CD8-positive, alpha-beta T cell (primary cell): ENCODE measurements at regions of chr4 and their contacts with region 1.

Region 1: DNA sequence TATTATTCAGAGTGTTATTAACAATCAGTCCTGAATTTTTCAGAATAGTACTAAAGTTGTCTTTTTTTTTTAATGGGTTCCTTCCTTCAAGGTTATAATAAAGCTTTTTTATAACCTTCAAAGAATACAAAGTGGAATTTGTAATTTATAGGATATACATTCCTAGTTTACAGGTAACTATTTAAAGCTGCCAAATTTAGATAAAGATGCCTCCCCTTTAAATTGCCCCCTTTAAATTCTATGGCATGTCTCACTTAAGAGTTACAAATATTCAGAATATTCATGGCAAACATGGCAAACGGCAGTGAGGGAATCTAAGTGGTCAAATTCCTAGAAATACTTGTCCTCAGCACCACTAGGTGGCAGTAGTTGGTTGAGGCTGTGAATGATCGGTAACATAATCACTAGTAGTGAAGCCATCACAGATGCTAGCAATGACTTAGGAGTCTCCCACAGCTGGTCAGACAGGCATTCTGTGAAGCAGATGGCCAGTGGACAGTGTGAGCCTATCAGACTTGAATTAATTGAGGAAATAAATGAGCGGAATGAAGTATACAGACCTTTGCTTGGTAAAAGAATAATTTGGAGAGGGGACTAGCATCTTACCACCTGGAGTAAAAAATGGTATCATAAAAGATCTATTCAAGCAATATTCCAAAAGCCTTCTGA is 86.4 kb downstream of the CBR4 start:
- DNase-seq: peak; percentile 5 to 77 (median 49)
- ATAC-seq: peak; percentile 49
- H3K4me3 ChIP-seq: no peak overlapping the region
- H3K4me3 Mint-ChIP-seq: no peak overlapping the region
- H3K27ac ChIP-seq: no peak overlapping the region
- H3K27ac Mint-ChIP-seq: no peak overlapping the region
- H3K4me1 ChIP-seq: no peaks in the 10 kb centered on the region
- H3K4me1 Mint-ChIP-seq: no peaks in the 10 kb centered on the region
- H3K27me3 ChIP-seq: no peaks in the 10 kb centered on the region
- H3K27me3 Mint-ChIP-seq: no peaks in the 10 kb centered on the region
- CTCF ChIP-seq: peak; percentile 77

Region 2: DNA sequence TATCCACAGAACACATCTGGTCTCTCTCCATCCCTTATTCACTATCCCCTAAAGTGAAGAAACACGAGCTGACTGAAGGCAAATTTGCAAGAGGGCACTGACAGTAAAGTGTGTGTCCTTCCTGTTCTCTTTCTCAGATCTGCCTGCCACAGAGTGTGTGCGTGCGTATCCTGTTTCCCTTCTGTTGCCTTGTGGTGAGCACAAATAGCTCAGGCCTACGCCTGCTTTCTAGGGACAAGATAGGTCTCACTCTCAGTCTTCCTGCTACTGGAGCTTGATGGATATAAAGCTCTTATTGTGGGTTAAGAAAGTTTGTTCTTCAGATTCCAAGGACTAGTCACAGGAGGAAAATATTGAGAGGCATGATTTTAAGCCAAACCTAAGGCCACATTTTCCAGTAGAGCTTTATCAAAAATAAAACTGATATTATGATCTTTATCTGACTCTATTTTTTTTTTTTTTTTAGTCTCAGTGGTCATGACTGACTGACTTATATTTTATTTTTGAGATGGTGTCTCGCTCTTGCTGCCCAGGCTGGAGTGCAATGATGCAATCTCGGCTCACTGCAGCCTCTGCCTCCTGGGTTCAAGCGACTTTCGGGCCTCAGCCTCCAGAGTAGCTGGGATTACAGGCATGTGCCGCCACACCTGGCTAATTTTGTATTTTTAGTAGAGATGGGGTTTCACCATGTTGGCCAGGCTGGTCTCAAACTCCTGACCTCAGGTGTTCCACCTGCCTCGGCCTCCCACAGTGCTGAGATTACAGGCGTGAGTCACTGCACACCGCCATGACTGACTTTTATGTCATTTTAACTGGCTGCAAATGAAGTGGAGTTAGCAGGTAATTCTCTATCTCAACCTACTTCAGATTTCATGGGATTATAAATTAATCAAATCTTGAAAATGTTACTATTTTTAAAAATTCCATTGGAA is 487.4 kb after region 1 on chr4:
- CTCF ChIA-PET with region 1: interaction called, 3 read pairs
- POLR2A ChIA-PET with region 1: no interaction called
- intact Hi-C with region 1: loop called in 1 of 2 experiments (anchors 10 kb)
- DNase-seq: peak; percentile 6 to 71 (median 40)
- ATAC-seq: peak; percentile 84
- H3K4me3 ChIP-seq: no peak overlapping the region
- H3K4me3 Mint-ChIP-seq: peak overlapping the region; percentile 19
- H3K27ac ChIP-seq: no peak overlapping the region
- H3K27ac Mint-ChIP-seq: peak overlapping the region; percentile 80
- H3K4me1 ChIP-seq: peaks cover 31% of the 10 kb centered on the region
- H3K4me1 Mint-ChIP-seq: peaks cover 26% of the 10 kb centered on the region
- H3K27me3 ChIP-seq: no peaks in the 10 kb centered on the region
- H3K27me3 Mint-ChIP-seq: no peaks in the 10 kb centered on the region
- CTCF ChIP-seq: no peak

Region 3: GRCh38 chr4:169485791-169486742 is 562.4 kb after region 1 on chr4:
- CTCF ChIA-PET with region 1: interaction called, 32 read pairs
- POLR2A ChIA-PET with region 1: no interaction called
- intact Hi-C with region 1: loop called (anchors 1 kb)
- DNase-seq: peak in 5 of 9 experiments; percentile 2 to 57 (median 18)
- ATAC-seq: no peak
- H3K4me3 ChIP-seq: no peak overlapping the region
- H3K4me3 Mint-ChIP-seq: no peak overlapping the region
- H3K27ac ChIP-seq: no peak overlapping the region
- H3K27ac Mint-ChIP-seq: no peak overlapping the region
- H3K4me1 ChIP-seq: no peaks in the 10 kb centered on the region
- H3K4me1 Mint-ChIP-seq: peaks cover 3% of the 10 kb centered on the region
- H3K27me3 ChIP-seq: no peaks in the 10 kb centered on the region
- H3K27me3 Mint-ChIP-seq: no peaks in the 10 kb centered on the region
- CTCF ChIP-seq: peak; percentile 60

Region 4: DNA sequence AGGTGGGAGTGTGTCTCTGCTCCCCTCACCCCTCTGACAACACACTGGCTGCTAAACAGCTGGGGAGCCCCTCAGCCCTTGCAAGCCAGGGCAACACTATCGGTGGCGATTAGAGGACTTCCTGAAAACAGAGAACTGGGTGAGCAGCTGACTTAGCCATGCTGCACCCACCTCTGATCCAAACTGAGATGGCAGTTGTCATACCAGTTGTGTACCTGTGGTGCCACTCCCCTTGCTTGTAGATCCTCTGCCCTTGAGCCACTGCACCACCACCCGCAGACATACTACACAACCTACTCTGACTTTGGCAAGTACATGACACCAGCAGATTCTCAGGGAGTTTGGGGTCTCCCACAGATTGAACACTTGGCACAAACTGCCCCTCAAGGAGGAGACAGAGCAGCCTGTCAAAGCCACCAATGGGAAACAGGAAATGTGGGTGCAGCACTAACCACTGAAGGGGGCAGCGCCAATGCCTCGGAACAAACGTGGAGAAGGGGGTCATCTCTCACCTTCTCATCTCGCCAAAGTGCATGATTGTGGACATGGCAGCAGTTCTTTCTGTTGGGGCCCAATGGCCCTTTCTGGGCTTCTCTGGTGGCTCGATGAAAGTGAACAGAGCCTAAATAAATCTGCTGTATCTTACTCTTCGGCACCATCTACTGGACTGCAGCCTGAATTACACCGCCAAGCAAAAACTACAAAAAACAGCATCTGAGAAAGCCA is 568.9 kb after region 1 on chr4:
- CTCF ChIA-PET with region 1: interaction called, 32 read pairs
- POLR2A ChIA-PET with region 1: no interaction called
- intact Hi-C with region 1: no loop called
- DNase-seq: peak in 6 of 9 experiments; percentile 3 to 50 (median 12)
- ATAC-seq: peak; percentile 26
- H3K4me3 ChIP-seq: no peak overlapping the region
- H3K4me3 Mint-ChIP-seq: no peak overlapping the region
- H3K27ac ChIP-seq: no peak overlapping the region
- H3K27ac Mint-ChIP-seq: peak overlapping the region; percentile 41
- H3K4me1 ChIP-seq: no peaks in the 10 kb centered on the region
- H3K4me1 Mint-ChIP-seq: peaks cover 3% of the 10 kb centered on the region
- H3K27me3 ChIP-seq: no peaks in the 10 kb centered on the region
- H3K27me3 Mint-ChIP-seq: no peaks in the 10 kb centered on the region
- CTCF ChIP-seq: peak; percentile 50

Region 5: GRCh38 chr4:169566021-169566818 is 642.6 kb after region 1 on chr4:
- CTCF ChIA-PET with region 1: interaction called, 21 read pairs
- POLR2A ChIA-PET with region 1: no interaction called
- intact Hi-C with region 1: loop called (anchors 1 kb)
- DNase-seq: peak in 4 of 9 experiments; percentile 36 to 63 (median 46)
- ATAC-seq: peak; percentile 52
- H3K4me3 ChIP-seq: no peak overlapping the region
- H3K4me3 Mint-ChIP-seq: no peak overlapping the region
- H3K27ac ChIP-seq: no peak overlapping the region
- H3K27ac Mint-ChIP-seq: no peak overlapping the region
- H3K4me1 ChIP-seq: no peaks in the 10 kb centered on the region
- H3K4me1 Mint-ChIP-seq: peaks cover 3% of the 10 kb centered on the region
- H3K27me3 ChIP-seq: no peaks in the 10 kb centered on the region
- H3K27me3 Mint-ChIP-seq: no peaks in the 10 kb centered on the region
- CTCF ChIP-seq: peak; percentile 56

Region 6: DNA sequence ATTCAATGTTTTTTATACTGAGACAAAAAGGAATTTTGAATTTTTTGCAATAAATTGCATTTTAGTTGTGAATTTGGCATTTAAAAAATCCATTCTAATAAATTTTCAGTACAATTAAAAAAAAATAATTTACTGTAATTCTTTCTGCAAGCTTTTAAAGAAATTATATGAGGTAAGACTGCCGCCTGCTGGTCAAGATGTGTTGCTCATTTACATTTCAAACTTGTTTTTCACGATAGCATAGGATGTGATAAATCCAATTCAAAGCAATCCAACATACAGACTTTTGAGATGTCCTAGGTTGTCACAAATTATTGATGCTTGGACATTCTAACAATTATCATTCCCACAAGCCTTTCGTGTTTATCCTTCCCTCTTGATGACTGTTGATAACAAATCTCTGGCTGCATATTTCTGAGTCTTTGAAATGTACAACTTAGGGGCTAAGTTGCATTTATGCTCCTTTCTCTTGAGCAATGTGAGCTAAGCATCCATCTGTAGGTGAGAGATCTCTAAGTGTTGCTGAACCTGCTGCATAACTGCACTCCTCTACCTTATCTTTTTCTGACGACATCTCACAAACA is 1124.2 kb after region 1 on chr4:
- CTCF ChIA-PET with region 1: no interaction called
- POLR2A ChIA-PET with region 1: no interaction called
- intact Hi-C with region 1: loop called in 1 of 2 experiments (anchors 2 kb)
- DNase-seq: peak in 8 of 9 experiments; percentile 16 to 74 (median 58)
- ATAC-seq: no peak
- H3K4me3 ChIP-seq: no peak overlapping the region
- H3K4me3 Mint-ChIP-seq: no peak overlapping the region
- H3K27ac ChIP-seq: no peak overlapping the region
- H3K27ac Mint-ChIP-seq: no peak overlapping the region
- H3K4me1 ChIP-seq: no peaks in the 10 kb centered on the region
- H3K4me1 Mint-ChIP-seq: no peaks in the 10 kb centered on the region
- H3K27me3 ChIP-seq: no peaks in the 10 kb centered on the region
- H3K27me3 Mint-ChIP-seq: peaks cover 3% of the 10 kb centered on the region
- CTCF ChIP-seq: peak; percentile 88